ENCODE measurements at regions of chr12 and their contacts with region 1.

Region 1: DNA sequence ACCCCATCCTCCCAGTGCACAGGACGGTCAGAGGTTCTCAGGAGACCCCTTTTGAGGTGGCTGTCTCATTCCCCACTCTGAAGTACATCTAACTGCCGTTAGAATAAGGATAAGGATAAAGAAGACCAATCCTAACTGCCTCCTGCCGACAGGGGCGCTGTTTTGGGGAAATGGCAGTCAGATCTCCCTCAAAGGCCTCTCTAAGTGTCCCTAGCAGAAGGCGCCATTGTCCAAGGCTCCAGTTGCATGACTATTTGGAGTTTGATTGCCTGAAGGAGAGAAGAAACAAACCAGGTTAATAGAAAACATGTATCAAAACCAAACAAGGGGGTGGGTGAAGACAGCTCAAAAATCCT is 29.1 kb upstream of the KLRB1 start:
- DNase-seq: no peak
- ATAC-seq: no peak

Region 2: DNA sequence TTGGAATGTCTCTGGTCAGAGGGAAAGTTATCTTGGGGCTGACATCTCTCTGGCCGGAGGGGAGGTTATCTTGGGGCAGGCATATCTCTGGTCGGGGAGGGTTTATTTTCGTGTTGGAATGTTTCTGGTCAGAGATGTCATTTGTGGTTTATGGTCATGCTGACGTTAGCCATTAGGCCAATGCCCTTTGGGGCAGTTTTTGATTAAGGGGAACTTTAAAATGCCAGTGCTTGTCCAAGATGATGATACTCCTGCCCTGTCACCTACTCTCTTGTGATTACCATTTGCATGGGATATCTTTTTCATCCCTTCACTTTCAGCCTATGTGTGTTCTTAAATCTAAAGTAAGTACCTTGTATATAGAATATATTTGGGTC is 492.1 kb before region 1 on chr12:
- intact Hi-C with region 1: no loop called
- DNase-seq: no peak
- ATAC-seq: no peak

Region 3: GRCh38 chr12:9464408-9464807 is 172.4 kb before region 1 on chr12:
- intact Hi-C with region 1: no loop called
- DNase-seq: no peak
- ATAC-seq: no peak

Region 4: DNA sequence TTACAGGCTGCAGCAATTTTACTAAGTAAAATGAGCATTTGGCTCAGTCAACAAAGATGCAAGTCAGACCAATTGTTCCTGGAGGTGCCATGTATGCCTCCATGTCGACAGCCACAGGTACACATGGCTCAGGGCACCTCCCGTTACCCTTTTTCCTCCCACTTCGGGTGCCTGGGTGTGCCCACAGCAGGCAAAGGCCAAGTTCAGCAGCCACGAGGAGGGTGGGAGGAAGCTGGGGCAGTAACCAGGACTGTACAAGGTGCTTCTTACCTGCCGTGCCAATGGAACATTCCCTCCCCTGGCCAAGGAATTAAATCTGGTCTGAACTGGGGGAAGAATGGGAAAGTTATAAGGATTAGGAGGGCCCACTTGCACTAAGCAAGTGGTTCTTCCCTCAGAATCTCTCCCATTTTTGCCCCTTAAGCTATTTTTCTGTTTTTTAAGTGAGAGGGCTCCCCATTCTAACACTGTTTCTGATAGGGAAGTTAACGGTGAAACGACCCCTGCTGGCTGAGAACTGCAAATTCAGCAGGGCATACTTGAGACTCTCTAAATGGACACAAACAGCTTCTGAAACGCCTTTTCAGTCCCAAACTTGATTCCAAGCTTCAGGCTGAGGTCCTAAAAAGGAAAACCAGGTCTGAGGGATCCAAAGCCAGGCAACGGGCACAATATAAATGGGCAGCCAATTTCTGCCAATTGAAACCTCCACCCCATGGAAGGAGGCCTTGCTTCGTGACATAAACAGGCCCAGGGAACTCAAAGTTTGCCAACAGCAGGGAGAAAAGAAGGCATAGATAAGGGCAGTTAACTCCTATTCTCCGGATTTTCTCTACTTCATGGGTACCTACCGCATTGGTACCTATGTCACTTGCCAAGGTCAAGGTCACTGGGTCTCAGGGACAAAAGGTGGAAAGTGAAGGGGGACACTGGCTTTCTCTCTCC is 71.3 kb after region 1 on chr12:
- intact Hi-C with region 1: loop called (anchors 5 kb)
- DNase-seq: peak; percentile 36
- ATAC-seq: peak; percentile 62 to 70

Measured in left cardiac atrium (tissue), 4 donors.